Activated B cell treated with CpG ODN at 0.5 μM for 24 hours (primary cell): ENCODE measurements at regions of chr1 and their contacts with region 1.

Region 1: DNA sequence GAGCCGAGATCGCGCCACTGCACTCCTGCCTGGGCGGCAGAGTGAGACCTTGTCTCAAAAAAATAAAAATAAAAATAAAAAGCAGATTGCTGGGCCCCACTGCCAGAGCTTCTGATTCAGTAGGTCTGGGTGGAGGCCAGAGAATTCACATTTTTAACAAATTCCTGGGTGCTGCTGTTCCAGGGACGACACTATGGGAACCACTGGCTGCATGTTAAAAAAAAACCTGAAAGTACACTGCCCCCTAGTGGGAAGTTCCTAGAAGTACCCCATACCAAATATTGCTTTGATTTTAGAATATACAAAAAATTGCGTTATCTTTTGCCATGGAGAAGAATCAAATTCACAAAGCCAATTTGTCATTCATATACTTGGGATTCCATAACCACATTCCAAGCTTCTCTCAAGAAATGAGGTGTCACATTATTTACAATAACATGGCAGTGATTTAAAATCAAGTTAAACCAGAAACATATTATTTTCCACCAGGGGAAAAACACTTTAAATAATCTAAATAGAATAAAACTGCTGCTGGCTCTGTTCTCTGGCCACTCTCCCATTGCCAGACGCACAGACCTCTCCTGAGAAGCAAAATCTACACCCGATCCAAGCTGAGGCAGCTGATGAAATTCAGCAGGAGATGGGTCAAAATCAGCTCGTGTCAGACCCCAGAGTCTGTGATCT is 27.4 kb downstream of the SYF2 start:
- DNase-seq: no peak
- ATAC-seq: peak; percentile 47
- H3K4me3 Mint-ChIP-seq: no peak overlapping the region
- H3K27ac Mint-ChIP-seq: no peak overlapping the region
- H3K4me1 Mint-ChIP-seq: no peaks in the 10 kb centered on the region
- H3K27me3 Mint-ChIP-seq: peaks cover 2% of the 10 kb centered on the region
- CTCF ChIP-seq: no peak

Region 2: GRCh38 chr1:25099343-25099951 is 105.5 kb before region 1 on chr1:
- CTCF ChIA-PET with region 1: interaction called, 3 read pairs
- POLR2A ChIA-PET with region 1: no interaction called
- intact Hi-C with region 1: loop called (anchors 2 kb)
- DNase-seq: no peak
- ATAC-seq: peak; percentile 18
- H3K4me3 Mint-ChIP-seq: no peak overlapping the region
- H3K27ac Mint-ChIP-seq: no peak overlapping the region
- H3K4me1 Mint-ChIP-seq: peaks cover 40% of the 10 kb centered on the region
- H3K27me3 Mint-ChIP-seq: no peaks in the 10 kb centered on the region
- CTCF ChIP-seq: no peak

Region 3: DNA sequence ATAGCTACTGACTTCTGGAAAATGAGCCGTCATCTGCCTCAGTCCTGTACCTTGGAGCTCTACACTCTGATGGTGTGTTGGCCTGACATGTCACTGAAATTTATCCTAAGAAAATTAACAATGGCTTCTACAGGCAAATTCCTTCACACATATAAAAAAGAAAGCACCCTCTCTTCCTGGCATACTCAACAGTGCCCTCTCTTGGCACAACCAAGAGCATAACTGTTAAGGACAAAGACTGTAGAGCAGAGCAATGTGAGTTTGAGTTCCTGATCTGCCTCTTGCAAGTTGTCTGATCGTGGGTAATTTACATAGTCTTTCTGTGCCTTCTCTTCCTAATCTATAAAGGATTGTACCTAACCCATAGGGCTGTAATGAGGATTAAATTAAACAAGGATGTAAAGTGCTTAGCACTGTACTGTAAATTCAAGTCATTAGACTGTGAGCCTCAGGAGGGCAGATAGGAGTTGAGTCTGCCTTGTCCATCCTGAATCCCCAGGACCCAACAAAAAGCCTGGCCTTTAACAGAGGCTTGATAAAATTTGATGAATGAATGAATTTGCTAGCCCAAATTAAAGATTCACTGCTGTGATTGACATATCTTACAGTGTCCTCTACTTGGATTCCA is 56.2 kb before region 1 on chr1:
- CTCF ChIA-PET with region 1: interaction called, 3 read pairs
- POLR2A ChIA-PET with region 1: no interaction called
- intact Hi-C with region 1: loop called (anchors 2 kb)
- DNase-seq: no peak
- ATAC-seq: peak; percentile 40
- H3K4me3 Mint-ChIP-seq: no peak overlapping the region
- H3K27ac Mint-ChIP-seq: no peak overlapping the region
- H3K4me1 Mint-ChIP-seq: peaks cover 15% of the 10 kb centered on the region
- H3K27me3 Mint-ChIP-seq: peaks cover 32% of the 10 kb centered on the region
- CTCF ChIP-seq: no peak